ENCODE measurements at regions of chr1 and their contacts with region 1.

Region 1: GRCh38 chr1:64356636-64357256 is 113.2 kb upstream of the CACHD1 start:
- DNase-seq: no peak
- ATAC-seq: no peak
- H3K4me3 ChIP-seq: no peak overlapping the region
- H3K27ac ChIP-seq: no peak overlapping the region
- H3K4me1 ChIP-seq: peaks cover 0 to 7% (median 0%) of the 10 kb centered on the region in 12 donors
- H3K27me3 ChIP-seq: peaks cover 0 to 5% (median 0%) of the 10 kb centered on the region in 9 donors
- CTCF ChIP-seq: no peak
- POLR2A ChIP-seq: no peak

Region 2: DNA sequence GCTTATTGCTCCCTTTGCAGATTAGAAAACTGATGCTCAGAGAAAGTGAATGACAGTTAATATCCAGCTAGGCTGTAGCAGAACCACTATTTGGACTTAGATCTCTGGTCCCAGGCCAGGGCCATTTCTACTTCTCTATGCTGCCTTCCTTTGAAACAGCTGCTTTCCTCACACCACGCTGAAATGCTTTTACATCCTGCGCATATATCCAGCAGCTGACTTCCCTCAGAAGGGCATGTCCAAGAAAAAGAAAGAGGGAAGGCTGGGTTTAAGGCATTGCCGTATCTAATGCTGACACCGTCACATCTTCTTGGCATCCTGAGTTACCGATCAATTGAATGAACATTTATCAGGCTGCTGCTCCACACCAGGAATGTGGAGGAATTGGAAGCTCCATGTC is 30.9 kb before region 1 on chr1:
- intact Hi-C with region 1: loop called in 1 of 10 experiments (anchors 2 kb)
- DNase-seq: no peak
- ATAC-seq: no peak
- H3K4me3 ChIP-seq: no peak overlapping the region
- H3K27ac ChIP-seq: no peak overlapping the region
- H3K4me1 ChIP-seq: peaks cover 0 to 7% (median 0%) of the 10 kb centered on the region in 12 donors
- H3K27me3 ChIP-seq: no peaks in the 10 kb centered on the region
- CTCF ChIP-seq: no peak
- POLR2A ChIP-seq: no peak

Measured in heart left ventricle (tissue), 16 donors.